Dendritic cell treated with granulocyte-macrophage colony-stimulating factor and Interleukin-4, amounts not matched to agents 40 ng/mL and 50 ng/mL, for 4 days (primary cell): ENCODE measurements at regions of chr11 and their contacts with region 1.

Region 1: GRCh38 chr11:83819933-83820549 is 533.9 kb upstream of the CCDC90B start:
- H3K4me3 Mint-ChIP-seq: no peak overlapping the region
- H3K27ac Mint-ChIP-seq: no peak overlapping the region
- H3K4me1 Mint-ChIP-seq: no peaks in the 10 kb centered on the region
- H3K27me3 Mint-ChIP-seq: no peaks in the 10 kb centered on the region

Region 2: DNA sequence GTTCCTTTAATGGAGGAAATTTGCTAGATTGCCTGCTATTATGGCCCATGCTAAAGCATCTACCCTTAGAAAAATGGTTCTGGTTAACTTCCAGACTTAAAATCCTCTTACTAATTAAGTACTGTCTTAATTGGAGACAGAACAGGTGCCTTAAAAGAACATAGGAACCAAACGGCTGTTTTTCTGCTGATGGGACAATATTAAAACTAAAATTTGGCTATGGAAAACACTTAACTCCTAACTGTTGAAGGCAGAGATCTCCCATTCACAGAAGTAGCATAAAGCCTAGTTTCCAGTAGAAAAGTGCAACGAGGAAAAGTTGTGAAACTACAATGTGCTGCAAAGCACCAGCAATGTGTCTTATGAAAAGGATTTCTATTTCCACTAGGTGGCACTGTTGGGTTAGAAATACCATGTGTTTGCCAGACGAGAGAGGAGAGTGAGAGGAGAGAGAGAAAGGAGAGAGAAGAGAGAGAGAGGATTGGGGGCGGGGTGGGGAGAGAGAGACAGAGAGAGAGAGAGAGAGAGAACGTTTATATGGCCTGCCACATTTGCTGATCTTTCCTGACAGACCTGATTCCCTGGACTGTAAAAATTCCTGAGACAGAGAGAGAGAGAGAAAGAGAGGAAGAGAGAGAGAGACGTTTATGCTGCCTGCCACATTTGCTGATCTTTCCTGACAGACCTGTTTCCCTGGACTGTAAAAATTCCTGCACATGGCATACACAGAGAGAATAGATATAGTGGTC is 1137.9 kb before region 1 on chr11:
- intact Hi-C with region 1: loop called (anchors 10 kb)
- H3K4me3 Mint-ChIP-seq: no peak overlapping the region
- H3K27ac Mint-ChIP-seq: no peak overlapping the region
- H3K4me1 Mint-ChIP-seq: peaks cover 6% of the 10 kb centered on the region
- H3K27me3 Mint-ChIP-seq: peaks cover 7% of the 10 kb centered on the region

Region 3: GRCh38 chr11:82718307-82718706 is 1101.7 kb before region 1 on chr11:
- intact Hi-C with region 1: loop called (anchors 1 kb)
- H3K4me3 Mint-ChIP-seq: no peak overlapping the region
- H3K27ac Mint-ChIP-seq: no peak overlapping the region
- H3K4me1 Mint-ChIP-seq: no peaks in the 10 kb centered on the region
- H3K27me3 Mint-ChIP-seq: peaks cover 2% of the 10 kb centered on the region

Region 4: GRCh38 chr11:82906244-82906654 is 913.8 kb before region 1 on chr11:
- intact Hi-C with region 1: loop called (anchors 5 kb)
- H3K4me3 Mint-ChIP-seq: no peak overlapping the region
- H3K27ac Mint-ChIP-seq: no peak overlapping the region
- H3K4me1 Mint-ChIP-seq: peaks cover 30% of the 10 kb centered on the region
- H3K27me3 Mint-ChIP-seq: no peaks in the 10 kb centered on the region

Region 5: GRCh38 chr11:83241291-83241946 is 578.6 kb before region 1 on chr11:
- intact Hi-C with region 1: loop called (anchors 5 kb)
- H3K4me3 Mint-ChIP-seq: no peak overlapping the region
- H3K27ac Mint-ChIP-seq: no peak overlapping the region
- H3K4me1 Mint-ChIP-seq: no peaks in the 10 kb centered on the region
- H3K27me3 Mint-ChIP-seq: no peaks in the 10 kb centered on the region

Region 6: GRCh38 chr11:83292709-83293456 is 527.2 kb before region 1 on chr11:
- intact Hi-C with region 1: loop called (anchors 2 kb)
- H3K4me3 Mint-ChIP-seq: no peak overlapping the region
- H3K27ac Mint-ChIP-seq: no peak overlapping the region
- H3K4me1 Mint-ChIP-seq: peaks cover 13% of the 10 kb centered on the region
- H3K27me3 Mint-ChIP-seq: peaks cover 4% of the 10 kb centered on the region

Region 7: GRCh38 chr11:83809274-83809673 is 10.8 kb before region 1 on chr11:
- intact Hi-C with region 1: no loop called
- H3K4me3 Mint-ChIP-seq: no peak overlapping the region
- H3K27ac Mint-ChIP-seq: no peak overlapping the region
- H3K4me1 Mint-ChIP-seq: no peaks in the 10 kb centered on the region
- H3K27me3 Mint-ChIP-seq: peaks cover 2% of the 10 kb centered on the region